ENCODE measurements at regions of chr11 and their contacts with region 1.

Region 1: DNA sequence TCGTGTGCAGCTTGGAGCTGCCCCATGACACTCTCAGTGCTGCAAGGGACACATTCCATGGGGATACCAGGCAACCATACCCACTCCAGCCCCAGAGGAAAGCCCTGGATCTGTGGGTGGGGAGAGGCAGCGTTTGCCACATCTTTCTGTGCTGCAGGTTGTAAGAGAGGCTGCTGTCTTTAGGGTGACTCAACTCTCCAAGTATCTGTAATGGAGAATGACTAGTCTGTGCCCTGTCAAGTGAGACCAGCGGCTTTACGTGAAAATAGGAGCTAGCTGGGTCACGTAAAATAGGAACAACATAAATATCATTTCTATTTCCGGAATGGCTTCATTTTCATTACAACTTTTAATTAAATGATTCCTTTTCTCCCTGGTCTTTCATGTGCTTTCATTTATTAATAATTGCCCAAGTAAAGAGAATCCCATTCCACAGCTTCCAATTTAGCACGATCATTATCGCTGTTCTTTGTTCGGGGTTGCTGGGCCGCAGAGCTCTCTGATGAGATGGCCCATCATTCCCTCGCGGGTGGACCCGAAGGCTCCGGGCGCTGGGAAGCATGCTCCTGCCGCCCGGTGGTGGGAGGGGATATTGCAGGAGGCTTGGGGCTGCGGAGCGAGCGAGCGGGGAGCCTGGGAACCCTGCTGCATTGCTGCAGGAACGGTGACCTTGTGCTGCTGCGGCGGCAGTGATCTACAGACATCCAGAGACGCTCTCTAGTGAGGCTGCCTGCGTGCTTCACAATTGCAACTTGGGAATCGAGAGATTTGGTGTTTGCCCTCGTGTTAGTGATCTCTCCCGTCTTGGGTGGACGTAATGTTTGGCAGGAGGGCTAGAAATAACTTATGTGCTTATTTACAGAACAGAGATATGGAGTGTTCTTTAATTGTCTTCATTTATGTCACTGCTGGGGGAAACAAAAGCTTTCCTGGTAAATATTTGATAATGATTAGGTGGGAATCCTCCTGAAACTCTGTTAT is 10.6 kb downstream of the SLC6A5 start:
- DNase-seq: peak; percentile 77
- CTCF ChIP-seq: peak; percentile 98

Region 2: GRCh38 chr11:19938169-19938856 is 671.7 kb before region 1 on chr11:
- in situ Hi-C with region 1: no loop called
- DNase-seq: peak; percentile 66
- CTCF ChIP-seq: peak; percentile 80

Region 3: GRCh38 chr11:20158597-20159257 is 451.3 kb before region 1 on chr11:
- in situ Hi-C with region 1: loop called (anchors 25 kb)
- DNase-seq: peak; percentile 45
- CTCF ChIP-seq: no peak

Region 4: DNA sequence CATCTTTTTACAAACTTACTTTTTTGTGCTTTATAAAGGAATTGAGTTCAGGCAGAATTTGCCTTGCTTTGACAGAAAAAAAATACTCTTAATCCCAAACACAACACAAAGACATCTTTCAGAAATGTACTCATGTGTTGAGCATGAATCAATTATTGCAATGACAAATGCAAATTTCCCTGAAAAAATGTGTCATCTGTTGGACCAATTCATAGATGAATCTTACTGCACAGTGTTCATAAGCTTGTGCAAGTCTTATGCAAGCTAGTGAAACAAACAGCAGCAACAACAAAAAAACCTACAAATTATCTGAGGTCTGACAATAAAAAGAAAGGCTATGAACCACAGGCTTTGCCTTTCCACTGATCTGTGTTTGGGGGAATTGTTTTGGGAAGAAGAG is 288.8 kb before region 1 on chr11:
- in situ Hi-C with region 1: no loop called
- DNase-seq: no peak
- CTCF ChIP-seq: no peak

Region 5: GRCh38 chr11:20387241-20388095 is 222.5 kb before region 1 on chr11 and contains the start of gene PRMT3:
- in situ Hi-C with region 1: loop called (anchors 25 kb)
- DNase-seq: peak; percentile 96
- CTCF ChIP-seq: no peak

Measured in GM13977 (cell line).